Activated T-helper 1 cell treated with anti-CD3 and anti-CD28 coated beads, Interleukin-12 subunit alpha, Interleukin-12 subunit beta, Interleukin-2, Interleukin-4 antibody, amounts not matched to agents 30 ng/mL and 10 ng/mL and 1 ng/mL, durations not matched to agents 14 hours and 24 hours and 36 hours (primary cell): ENCODE measurements at regions of chr15 and their contacts with region 1.

Region 1: GRCh38 chr15:31128919-31129768 is 27.6 kb upstream of the TRPM1 start:
- DNase-seq: peak; percentile 59
- H3K4me3 Mint-ChIP-seq: peak overlapping the region; percentile 11
- H3K27ac Mint-ChIP-seq: no peak overlapping the region
- H3K4me1 Mint-ChIP-seq: peaks cover 14% of the 10 kb centered on the region
- H3K27me3 Mint-ChIP-seq: peaks cover 11% of the 10 kb centered on the region

Region 2: GRCh38 chr15:30859091-30859874 is 269.9 kb before region 1 on chr15:
- intact Hi-C with region 1: loop called (anchors 10 kb)
- DNase-seq: no peak
- H3K4me3 Mint-ChIP-seq: no peak overlapping the region
- H3K27ac Mint-ChIP-seq: no peak overlapping the region
- H3K4me1 Mint-ChIP-seq: peaks cover 10% of the 10 kb centered on the region
- H3K27me3 Mint-ChIP-seq: no peaks in the 10 kb centered on the region

Region 3: DNA sequence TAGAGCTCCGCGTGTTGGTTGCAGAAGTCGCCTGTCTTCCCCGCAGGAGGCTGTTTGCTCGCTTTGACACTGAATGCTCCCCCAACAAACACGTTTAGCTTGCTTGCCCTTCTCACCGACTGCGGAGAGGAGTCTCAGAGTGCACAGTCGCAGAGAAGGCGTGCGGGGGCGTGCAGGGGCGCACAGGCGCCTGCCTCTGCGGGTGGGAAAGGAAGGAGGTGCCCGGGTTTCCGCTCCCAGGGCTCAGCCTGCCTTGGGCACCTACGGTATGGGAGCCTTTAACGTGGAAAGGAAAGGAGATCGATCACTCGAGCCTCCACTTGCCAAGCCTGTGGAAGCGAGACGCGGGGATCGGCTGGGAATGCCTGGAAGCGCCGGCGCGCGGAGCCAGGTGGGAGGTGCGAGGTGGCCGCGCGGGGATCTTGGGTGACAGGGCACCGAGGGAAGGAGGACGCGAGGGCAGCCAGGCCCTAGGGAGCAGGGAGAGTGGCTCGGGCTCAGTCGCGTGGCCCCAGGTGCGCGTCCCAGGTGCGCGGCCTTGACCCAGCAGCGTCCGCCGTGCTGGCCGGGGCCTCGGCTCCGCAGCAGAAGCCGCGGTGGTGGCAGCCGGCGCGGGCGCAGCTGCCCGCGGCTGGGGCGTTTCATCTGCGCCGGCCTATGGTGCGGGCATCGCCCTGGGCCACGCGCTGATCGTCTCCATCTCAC is 225.5 kb before region 1 on chr15 and contains the start of gene FAN1:
- intact Hi-C with region 1: loop called (anchors 10 kb)
- DNase-seq: peak; percentile 72
- H3K4me3 Mint-ChIP-seq: peak within 1 kb of the TSS; percentile 93
- H3K27ac Mint-ChIP-seq: peak within 1 kb of the TSS; percentile 84
- H3K4me1 Mint-ChIP-seq: peaks cover 32% of the 10 kb centered on the region
- H3K27me3 Mint-ChIP-seq: no peaks in the 10 kb centered on the region
- total RNA-seq, gene FAN1: 26.5 and 27.7 TPM in 2 replicates

Region 4: DNA sequence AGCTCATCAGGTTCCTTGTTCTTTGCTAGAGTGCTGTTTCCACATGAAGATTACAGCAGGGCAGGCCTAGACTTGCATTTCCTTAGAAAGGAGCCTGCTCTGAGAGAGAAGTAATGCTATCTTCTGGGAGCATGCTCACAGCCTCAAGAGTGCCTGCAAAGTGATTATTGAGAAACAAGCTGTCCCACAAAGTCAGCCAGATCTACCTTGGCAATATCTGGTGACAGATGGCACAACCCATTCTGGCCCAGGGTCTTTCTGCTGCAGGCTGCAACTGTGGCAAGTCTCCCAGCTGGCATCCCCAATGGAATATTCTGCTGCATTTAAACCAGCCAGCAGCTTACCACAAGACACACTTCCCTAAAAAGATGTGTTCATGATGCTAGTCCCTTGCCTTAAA is 167.1 kb before region 1 on chr15:
- intact Hi-C with region 1: loop called (anchors 10 kb)
- DNase-seq: no peak
- H3K4me3 Mint-ChIP-seq: no peak overlapping the region
- H3K27ac Mint-ChIP-seq: no peak overlapping the region
- H3K4me1 Mint-ChIP-seq: peaks cover 15% of the 10 kb centered on the region
- H3K27me3 Mint-ChIP-seq: no peaks in the 10 kb centered on the region

Region 5: GRCh38 chr15:30991255-30992072 is 137.7 kb before region 1 on chr15 and contains the start of gene MTMR10:
- intact Hi-C with region 1: loop called (anchors 5 kb)
- DNase-seq: peak; percentile 75
- H3K4me3 Mint-ChIP-seq: peak within 1 kb of the TSS; percentile 93
- H3K27ac Mint-ChIP-seq: peak within 1 kb of the TSS; percentile 85
- H3K4me1 Mint-ChIP-seq: peaks cover 26% of the 10 kb centered on the region
- H3K27me3 Mint-ChIP-seq: peaks cover 4% of the 10 kb centered on the region
- total RNA-seq, gene MTMR10: 11.8 and 13.4 TPM in 2 replicates

Region 6: GRCh38 chr15:31272558-31273257 is 143.6 kb after region 1 on chr15:
- intact Hi-C with region 1: no loop called
- DNase-seq: no peak
- H3K4me3 Mint-ChIP-seq: no peak overlapping the region
- H3K27ac Mint-ChIP-seq: no peak overlapping the region
- H3K4me1 Mint-ChIP-seq: peaks cover 49% of the 10 kb centered on the region
- H3K27me3 Mint-ChIP-seq: no peaks in the 10 kb centered on the region

Region 7: DNA sequence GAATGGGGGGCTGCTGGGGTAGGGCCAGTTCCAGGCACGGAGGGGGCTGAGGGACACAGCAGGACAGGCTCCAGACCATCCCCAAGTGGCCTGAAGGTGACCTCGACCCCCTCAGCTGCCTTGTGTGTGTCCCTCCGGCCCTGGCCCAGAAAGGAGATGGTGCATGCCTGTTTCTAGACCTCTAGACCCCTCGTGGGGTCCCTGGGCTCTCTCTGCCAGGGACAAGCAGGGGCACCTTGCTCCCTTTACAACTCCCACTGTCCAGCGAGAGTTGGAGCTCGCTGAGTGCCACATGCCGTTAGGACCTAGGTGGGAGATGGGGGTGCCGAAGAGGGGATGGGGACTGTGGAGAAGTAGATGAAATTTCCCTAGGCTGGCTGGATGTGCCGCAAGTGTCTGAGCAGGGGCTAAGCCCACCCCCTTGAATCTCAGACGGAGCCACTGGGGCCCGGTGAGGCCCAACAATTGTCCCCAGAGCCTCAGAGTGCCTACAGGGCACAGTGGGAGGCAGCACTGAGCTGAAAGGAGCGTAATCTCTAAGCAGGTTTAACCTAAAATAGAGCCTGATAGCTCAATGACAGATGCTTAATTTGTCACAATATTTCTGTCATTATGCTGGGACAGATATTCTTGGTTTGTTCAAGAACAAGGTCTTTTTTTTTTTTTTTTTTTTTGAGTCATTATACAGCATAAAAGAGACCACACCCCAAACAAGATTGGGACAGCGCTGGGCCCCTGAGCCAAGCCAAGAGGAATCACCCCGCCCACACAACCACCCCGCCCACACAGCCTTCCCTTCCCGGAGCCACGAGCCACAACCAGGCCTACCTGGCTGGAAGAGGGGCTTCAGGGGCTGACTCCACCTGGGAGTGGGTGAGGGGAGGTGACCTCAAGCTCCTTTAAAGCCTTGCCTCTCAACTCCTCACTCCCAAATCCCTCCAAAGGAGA is 173.9 kb after region 1 on chr15:
- intact Hi-C with region 1: no loop called
- DNase-seq: no peak
- H3K4me3 Mint-ChIP-seq: no peak overlapping the region
- H3K27ac Mint-ChIP-seq: no peak overlapping the region
- H3K4me1 Mint-ChIP-seq: peaks cover 34% of the 10 kb centered on the region
- H3K27me3 Mint-ChIP-seq: peaks cover 2% of the 10 kb centered on the region